ENCODE measurements at regions of chr11 and their contacts with region 1.

Region 1: DNA sequence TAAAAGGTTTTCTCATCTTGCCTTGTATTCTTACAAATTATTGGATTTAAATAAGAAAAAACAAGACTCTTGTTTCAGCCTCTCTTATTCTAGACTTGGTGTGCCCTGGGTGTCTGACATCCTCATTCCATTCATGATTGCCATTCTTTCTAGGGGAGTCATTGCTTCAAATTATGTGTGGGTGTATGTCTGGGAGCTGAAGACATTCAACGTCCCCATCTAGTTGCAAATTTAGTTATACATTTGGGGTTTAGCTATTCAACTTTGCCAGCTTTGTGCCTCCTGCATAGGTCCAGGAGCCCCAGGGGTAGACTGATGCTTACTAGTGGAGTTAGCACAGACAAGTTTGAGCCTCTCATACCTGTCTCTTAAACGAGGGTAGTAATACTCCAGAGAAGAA is 18.0 kb downstream of the MAML2 start:
- DNase-seq: peak; percentile 49 to 97
- H3K4me3 ChIP-seq: peak overlapping the region; percentile 23; the same call in 1 of the 2 replicates
- H3K27ac ChIP-seq: peak overlapping the region; percentile 86
- H3K4me1 ChIP-seq: peaks cover 56% of the 10 kb centered on the region
- H3K27me3 ChIP-seq: no peaks in the 10 kb centered on the region
- CTCF ChIP-seq: no peak

Region 2: DNA sequence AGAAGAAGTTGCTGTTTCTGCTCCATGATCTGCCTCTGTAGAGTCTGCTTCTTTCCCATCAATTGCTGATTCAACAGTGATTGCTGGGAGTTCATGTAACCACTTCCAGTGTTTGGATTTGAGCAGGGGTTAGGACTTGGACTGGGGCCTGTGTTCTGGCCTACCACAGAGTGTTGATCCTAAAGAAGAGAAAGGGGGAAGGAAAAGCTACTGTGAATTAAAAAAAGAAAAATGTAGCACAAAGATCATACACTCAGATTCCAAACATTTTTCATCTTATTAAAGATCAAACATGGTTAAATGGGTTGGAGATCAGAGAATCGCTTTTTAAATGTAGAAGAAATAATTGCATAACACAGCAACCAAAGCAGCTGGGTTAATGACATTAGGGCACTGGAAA is 333.4 kb before region 1 on chr11:
- CTCF ChIA-PET with region 1: no interaction called
- POLR2A ChIA-PET with region 1: no interaction called
- intact Hi-C with region 1: loop called (anchors 1 kb)
- DNase-seq: peak in 1 of 2 experiments; percentile 56
- H3K4me3 ChIP-seq: no peak overlapping the region
- H3K27ac ChIP-seq: peak overlapping the region; percentile 75
- H3K4me1 ChIP-seq: peaks cover 30% of the 10 kb centered on the region
- H3K27me3 ChIP-seq: no peaks in the 10 kb centered on the region
- CTCF ChIP-seq: no peak

Region 3: GRCh38 chr11:96073536-96073935 is 251.4 kb before region 1 on chr11:
- CTCF ChIA-PET with region 1: interaction called, 20 read pairs
- POLR2A ChIA-PET with region 1: no interaction called
- intact Hi-C with region 1: no loop called
- DNase-seq: no peak
- H3K4me3 ChIP-seq: no peak overlapping the region
- H3K27ac ChIP-seq: no peak overlapping the region
- H3K4me1 ChIP-seq: peaks cover 9% of the 10 kb centered on the region
- H3K27me3 ChIP-seq: no peaks in the 10 kb centered on the region
- CTCF ChIP-seq: no peak

Region 4: DNA sequence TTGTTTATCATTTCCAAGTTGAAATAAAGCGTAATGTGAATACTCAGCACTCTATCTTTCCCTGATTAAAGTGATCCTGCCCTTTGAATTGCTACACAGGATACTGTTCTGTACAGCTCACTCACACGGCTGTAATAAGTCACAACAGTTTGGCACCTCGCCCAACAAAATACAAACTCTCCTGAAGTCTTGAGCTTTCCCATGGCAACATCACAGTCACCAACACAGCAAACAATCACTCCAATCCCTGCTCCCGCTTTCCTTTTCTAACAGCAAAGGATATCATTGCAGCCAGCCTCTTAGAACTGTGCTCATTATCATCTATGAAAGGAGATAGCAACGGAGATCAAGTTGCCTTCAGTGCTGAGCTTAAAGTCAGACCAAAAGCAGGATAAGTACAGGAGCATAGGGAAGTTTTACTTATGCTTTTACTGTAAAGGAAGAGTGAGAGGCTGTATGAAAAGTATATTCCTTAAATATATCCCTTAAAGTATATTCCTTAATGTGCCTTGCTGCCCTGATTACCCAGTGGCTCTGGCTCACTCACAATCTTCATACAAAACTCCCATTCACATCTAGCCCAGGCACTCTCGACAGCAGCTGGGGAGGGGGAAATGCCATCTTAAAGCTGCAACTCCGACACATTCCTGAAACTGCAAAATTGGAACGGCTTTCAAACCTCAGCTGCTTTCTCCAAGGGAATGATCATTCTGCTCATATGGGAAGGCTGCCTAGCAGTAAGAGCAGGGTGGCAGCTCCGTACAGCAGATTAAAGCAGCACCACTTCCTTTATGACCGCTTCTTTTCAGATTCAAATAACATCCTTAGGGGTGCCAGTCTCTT is 17.8 kb before region 1 on chr11:
- CTCF ChIA-PET with region 1: no interaction called
- POLR2A ChIA-PET with region 1: interaction called, 29 read pairs
- intact Hi-C with region 1: loop called (anchors 2 kb)
- DNase-seq: peak; percentile 84 to 100
- H3K4me3 ChIP-seq: peak overlapping the region; percentile 43
- H3K27ac ChIP-seq: peak overlapping the region; percentile 96
- H3K4me1 ChIP-seq: peaks cover 99% of the 10 kb centered on the region
- H3K27me3 ChIP-seq: no peaks in the 10 kb centered on the region
- CTCF ChIP-seq: no peak

Region 5: GRCh38 chr11:96314326-96315020 is 10.5 kb before region 1 on chr11:
- CTCF ChIA-PET with region 1: interaction called, 5 read pairs
- POLR2A ChIA-PET with region 1: interaction called, 29 read pairs
- intact Hi-C with region 1: loop called (anchors 1 kb)
- DNase-seq: peak; percentile 69 to 100
- H3K4me3 ChIP-seq: peak overlapping the region; percentile 41
- H3K27ac ChIP-seq: peak overlapping the region; percentile 96
- H3K4me1 ChIP-seq: peaks cover 100% of the 10 kb centered on the region
- H3K27me3 ChIP-seq: no peaks in the 10 kb centered on the region
- CTCF ChIP-seq: no peak